ENCODE measurements at regions of chr14 and their contacts with region 1.

Region 1: DNA sequence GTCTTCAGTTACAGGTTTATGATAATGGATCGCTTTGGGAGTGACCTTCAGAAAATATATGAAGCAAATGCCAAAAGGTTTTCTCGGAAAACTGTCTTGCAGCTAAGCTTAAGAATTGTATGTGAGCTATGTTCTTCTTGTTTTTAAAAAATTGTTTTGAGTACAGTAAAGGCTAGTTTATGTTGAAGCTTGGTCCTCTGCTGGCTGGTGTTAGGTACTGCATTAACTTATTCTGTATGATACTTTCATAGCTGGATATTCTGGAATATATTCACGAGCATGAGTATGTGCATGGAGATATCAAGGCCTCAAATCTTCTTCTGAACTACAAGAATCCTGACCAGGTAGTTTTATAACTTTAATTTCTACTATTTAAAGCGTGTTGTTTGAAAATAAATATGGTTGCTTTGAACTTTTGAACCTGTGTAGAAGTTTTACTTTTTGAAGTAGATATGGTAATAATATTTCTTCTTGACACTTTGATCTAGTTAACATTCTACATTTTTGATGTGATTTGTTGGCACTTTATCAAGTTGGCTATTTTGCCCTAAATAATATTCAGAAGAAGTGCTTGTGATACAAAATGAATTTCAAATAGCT is 55.7 kb downstream of the VRK1 start:
- DNase-seq: no peak
- H3K4me3 Mint-ChIP-seq: no peak overlapping the region
- H3K27ac Mint-ChIP-seq: no peak overlapping the region
- H3K4me1 Mint-ChIP-seq: peaks cover 19% of the 10 kb centered on the region
- H3K27me3 Mint-ChIP-seq: no peaks in the 10 kb centered on the region

Region 2: DNA sequence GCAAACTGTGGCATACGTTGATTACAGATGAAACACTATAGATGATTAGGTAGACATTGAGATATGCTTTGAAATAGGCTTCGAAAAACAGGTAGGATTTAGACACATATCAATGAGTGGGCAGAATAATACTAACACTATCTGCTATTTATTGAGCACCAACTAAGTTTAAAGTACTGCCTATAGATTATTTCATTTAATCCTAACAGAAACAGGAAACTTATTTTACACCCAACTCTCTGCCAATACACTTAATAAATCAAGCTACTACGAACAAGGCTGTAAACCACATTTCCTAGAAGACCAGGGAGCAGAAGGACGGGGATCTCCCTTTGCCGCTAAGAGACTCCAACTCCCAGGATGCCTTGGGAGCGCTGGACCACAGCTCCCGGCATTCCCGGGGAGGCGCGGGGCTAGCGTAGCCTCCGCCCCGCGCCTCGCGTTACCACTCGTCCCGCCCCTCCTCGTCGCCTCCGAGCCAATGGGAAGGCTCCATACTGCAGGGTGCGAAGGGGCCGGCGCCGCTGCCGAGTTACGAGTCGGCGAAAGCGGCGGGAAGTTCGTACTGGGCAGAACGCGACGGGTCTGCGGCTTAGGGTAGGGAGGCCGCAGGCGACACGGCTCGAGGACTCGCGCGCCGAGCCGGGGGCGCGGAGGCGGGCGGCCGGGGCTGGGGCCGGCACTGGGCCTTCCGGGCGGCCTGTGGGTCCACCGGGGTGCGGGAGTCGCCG is 55.9 kb before region 1 on chr14 and contains the start of gene VRK1:
- CTCF ChIA-PET with region 1: interaction called, 15 read pairs
- intact Hi-C with region 1: loop called (anchors 5 kb)
- DNase-seq: peak; percentile 96
- H3K4me3 Mint-ChIP-seq: peak within 1 kb of the TSS; percentile 92
- H3K27ac Mint-ChIP-seq: peak within 1 kb of the TSS; percentile 84
- H3K4me1 Mint-ChIP-seq: peaks cover 20% of the 10 kb centered on the region
- H3K27me3 Mint-ChIP-seq: no peaks in the 10 kb centered on the region
- total RNA-seq, gene VRK1: 64.9 to 74.3 TPM

Region 3: DNA sequence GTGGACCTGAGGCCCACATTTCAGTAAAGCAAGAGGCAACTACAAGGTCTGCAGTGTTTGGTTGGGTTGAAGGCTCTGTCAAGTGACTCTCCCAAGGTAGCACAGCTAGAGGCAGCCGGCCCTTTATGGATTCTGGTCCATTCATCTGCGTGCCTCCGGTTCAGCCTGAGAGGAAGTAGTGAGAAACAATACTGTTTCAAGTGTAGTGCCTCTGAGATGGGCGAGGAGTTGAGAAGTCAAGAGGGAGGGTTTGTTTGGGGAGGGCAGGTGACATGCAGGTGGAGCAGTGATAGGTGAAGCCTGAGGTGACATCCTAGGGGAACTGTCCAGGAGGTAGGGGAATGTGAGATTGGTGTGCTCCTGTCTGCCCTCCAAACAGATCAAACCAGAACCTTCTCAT is 877.8 kb after region 1 on chr14:
- CTCF ChIA-PET with region 1: no interaction called
- intact Hi-C with region 1: no loop called
- DNase-seq: peak; percentile 38
- H3K4me3 Mint-ChIP-seq: no peak overlapping the region
- H3K27ac Mint-ChIP-seq: no peak overlapping the region
- H3K4me1 Mint-ChIP-seq: peaks cover 31% of the 10 kb centered on the region
- H3K27me3 Mint-ChIP-seq: no peaks in the 10 kb centered on the region

Measured in activated naive CD4-positive, alpha-beta T cell treated with anti-CD3 and anti-CD28 coated beads for 36 hours (primary cell).